Activated B cell treated with CpG ODN at 0.5 μM for 24 hours (primary cell): ENCODE measurements at regions of chr7 and their contacts with region 1.

Region 1: GRCh38 chr7:152675759-152676636 is at the start of gene XRCC2:
- DNase-seq: peak; percentile 99
- ATAC-seq: peak; percentile 94
- H3K4me3 Mint-ChIP-seq: peak within 1 kb of the TSS; percentile 94
- H3K27ac Mint-ChIP-seq: peak within 1 kb of the TSS; percentile 93
- H3K4me1 Mint-ChIP-seq: peaks cover 11% of the 10 kb centered on the region
- H3K27me3 Mint-ChIP-seq: no peaks in the 10 kb centered on the region
- CTCF ChIP-seq: no peak
- total RNA-seq, gene XRCC2: 1.7 and 2.3 TPM in 2 replicates

Region 2: GRCh38 chr7:151226875-151227782 is 1448.9 kb before region 1 on chr7 and contains the start of gene ABCF2:
- CTCF ChIA-PET with region 1: no interaction called
- POLR2A ChIA-PET with region 1: no interaction called
- intact Hi-C with region 1: loop called (anchors 2 kb)
- DNase-seq: peak; percentile 97
- ATAC-seq: peak; percentile 99
- H3K4me3 Mint-ChIP-seq: peak within 1 kb of the TSS; percentile 99
- H3K27ac Mint-ChIP-seq: peak within 1 kb of the TSS; percentile 91
- H3K4me1 Mint-ChIP-seq: peaks cover 41% of the 10 kb centered on the region
- H3K27me3 Mint-ChIP-seq: no peaks in the 10 kb centered on the region
- CTCF ChIP-seq: no peak
- total RNA-seq, gene ABCF2: 47.3 and 52.4 TPM in 2 replicates

Region 3: GRCh38 chr7:152025077-152025936 is 650.7 kb before region 1 on chr7 and contains the start of gene GALNT11:
- CTCF ChIA-PET with region 1: no interaction called
- POLR2A ChIA-PET with region 1: no interaction called
- intact Hi-C with region 1: loop called (anchors 1 kb)
- DNase-seq: peak; percentile 90
- ATAC-seq: peak; percentile 92
- H3K4me3 Mint-ChIP-seq: peak within 1 kb of the TSS; percentile 87
- H3K27ac Mint-ChIP-seq: peak within 1 kb of the TSS; percentile 81
- H3K4me1 Mint-ChIP-seq: peaks cover 11% of the 10 kb centered on the region
- H3K27me3 Mint-ChIP-seq: no peaks in the 10 kb centered on the region
- CTCF ChIP-seq: no peak
- total RNA-seq, gene GALNT11: 9.0 and 10.8 TPM in 2 replicates

Region 4: GRCh38 chr7:152336754-152337368 is 339.1 kb before region 1 on chr7:
- CTCF ChIA-PET with region 1: no interaction called
- POLR2A ChIA-PET with region 1: no interaction called
- intact Hi-C with region 1: loop called (anchors 2 kb)
- DNase-seq: no peak
- ATAC-seq: peak; percentile 45
- H3K4me3 Mint-ChIP-seq: no peak overlapping the region
- H3K27ac Mint-ChIP-seq: no peak overlapping the region
- H3K4me1 Mint-ChIP-seq: peaks cover 63% of the 10 kb centered on the region
- H3K27me3 Mint-ChIP-seq: no peaks in the 10 kb centered on the region
- CTCF ChIP-seq: peak; percentile 49

Region 5: GRCh38 chr7:152463709-152464311 is 212.2 kb before region 1 on chr7:
- CTCF ChIA-PET with region 1: no interaction called
- POLR2A ChIA-PET with region 1: interaction called, 4 read pairs
- intact Hi-C with region 1: loop called (anchors 1 kb)
- DNase-seq: peak; percentile 100
- ATAC-seq: peak; percentile 91
- H3K4me3 Mint-ChIP-seq: peak overlapping the region; percentile 97
- H3K27ac Mint-ChIP-seq: peak overlapping the region; percentile 53
- H3K4me1 Mint-ChIP-seq: peaks cover 26% of the 10 kb centered on the region
- H3K27me3 Mint-ChIP-seq: no peaks in the 10 kb centered on the region
- CTCF ChIP-seq: no peak

Region 6: DNA sequence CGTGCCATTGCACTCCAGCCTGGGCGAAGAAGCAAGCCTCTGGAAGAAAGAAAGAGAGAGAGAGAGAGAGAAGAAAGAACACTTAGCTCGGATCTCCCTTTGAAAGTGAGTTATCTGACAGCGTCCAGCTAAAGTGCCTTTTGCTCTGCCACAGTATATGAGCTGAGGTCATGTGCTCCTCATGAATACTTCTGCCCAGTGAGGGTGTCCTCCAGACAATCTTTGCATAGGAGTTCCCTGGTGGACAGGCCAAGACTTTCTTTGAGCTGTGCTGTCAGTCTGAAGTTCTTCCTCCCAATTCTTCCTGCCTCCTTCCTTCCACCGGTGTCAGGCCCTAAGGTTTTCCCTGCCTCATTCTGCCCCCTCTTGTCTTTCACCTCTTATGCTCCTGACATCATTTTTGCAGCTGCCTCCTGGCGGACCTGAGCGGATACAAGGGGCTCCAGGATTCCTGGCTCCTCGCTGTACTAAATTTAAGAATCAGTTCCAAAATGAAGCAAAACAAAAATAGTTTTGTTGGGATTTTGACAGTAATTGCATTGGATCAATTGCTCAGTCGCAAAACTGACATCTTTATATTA is 31.9 kb before region 1 on chr7:
- CTCF ChIA-PET with region 1: no interaction called
- POLR2A ChIA-PET with region 1: no interaction called
- intact Hi-C with region 1: no loop called
- DNase-seq: no peak
- ATAC-seq: no peak
- H3K4me3 Mint-ChIP-seq: no peak overlapping the region
- H3K27ac Mint-ChIP-seq: no peak overlapping the region
- H3K4me1 Mint-ChIP-seq: no peaks in the 10 kb centered on the region
- H3K27me3 Mint-ChIP-seq: no peaks in the 10 kb centered on the region
- CTCF ChIP-seq: no peak